ENCODE measurements at regions of chr1 and their contacts with region 1.

Region 1: DNA sequence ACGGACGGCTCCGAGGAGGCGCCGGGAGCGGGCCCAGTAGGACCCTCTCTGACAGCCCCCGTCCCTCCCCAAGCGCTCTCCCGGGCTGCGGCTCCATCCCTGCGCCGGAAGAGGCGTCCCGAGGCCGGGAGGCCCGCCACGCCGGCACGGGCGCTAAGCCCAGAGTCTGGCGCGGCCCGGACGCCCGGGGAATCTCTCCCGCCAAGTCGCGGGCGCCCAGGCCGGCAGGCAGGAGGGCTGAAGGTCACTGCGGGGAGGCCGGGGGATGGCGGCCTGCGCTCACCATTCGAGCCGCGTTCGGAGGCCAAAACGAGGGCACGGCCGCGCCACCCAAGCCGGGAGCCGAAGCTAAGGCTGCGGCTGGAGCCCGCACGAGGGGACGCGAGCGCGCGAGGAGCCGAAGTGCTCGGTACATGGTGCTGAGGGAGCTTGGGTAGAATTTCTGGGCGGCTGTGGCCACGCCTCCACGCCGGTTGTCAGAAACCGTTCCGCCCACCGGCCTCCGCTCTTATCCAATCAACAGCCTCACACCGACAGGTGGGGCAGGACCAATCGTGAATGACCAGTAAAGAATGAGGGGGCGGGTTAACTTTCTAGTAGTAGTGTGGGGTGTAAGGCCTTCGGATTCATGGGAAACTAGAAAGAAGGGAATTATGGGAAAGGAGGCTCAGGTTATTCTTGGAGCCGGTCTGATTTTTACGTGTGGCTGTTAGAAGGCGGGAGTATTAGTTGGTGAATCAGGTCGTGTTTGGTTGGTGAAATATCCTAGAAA is at the start of gene FH:
- DNase-seq: peak; percentile 97
- ATAC-seq: peak; percentile 98
- H3K4me3 ChIP-seq: peak within 1 kb of the TSS; percentile 56 to 84 (median 79)
- H3K4me3 Mint-ChIP-seq: peak within 1 kb of the TSS; percentile 89
- H3K27ac ChIP-seq: peak within 1 kb of the TSS; percentile 56 to 84
- H3K27ac Mint-ChIP-seq: peak within 1 kb of the TSS; percentile 71
- H3K4me1 ChIP-seq: peaks cover 9 to 10% of the 10 kb centered on the region in 2 donors
- H3K4me1 Mint-ChIP-seq: peaks cover 23% of the 10 kb centered on the region
- H3K27me3 ChIP-seq: peaks cover 0 to 3% (median 0%) of the 10 kb centered on the region in 4 experiments
- H3K27me3 Mint-ChIP-seq: peaks cover 3% of the 10 kb centered on the region
- CTCF ChIP-seq: no peak
- total RNA-seq, gene FH: 26.0 and 32.4 TPM in 2 replicates

Region 2: DNA sequence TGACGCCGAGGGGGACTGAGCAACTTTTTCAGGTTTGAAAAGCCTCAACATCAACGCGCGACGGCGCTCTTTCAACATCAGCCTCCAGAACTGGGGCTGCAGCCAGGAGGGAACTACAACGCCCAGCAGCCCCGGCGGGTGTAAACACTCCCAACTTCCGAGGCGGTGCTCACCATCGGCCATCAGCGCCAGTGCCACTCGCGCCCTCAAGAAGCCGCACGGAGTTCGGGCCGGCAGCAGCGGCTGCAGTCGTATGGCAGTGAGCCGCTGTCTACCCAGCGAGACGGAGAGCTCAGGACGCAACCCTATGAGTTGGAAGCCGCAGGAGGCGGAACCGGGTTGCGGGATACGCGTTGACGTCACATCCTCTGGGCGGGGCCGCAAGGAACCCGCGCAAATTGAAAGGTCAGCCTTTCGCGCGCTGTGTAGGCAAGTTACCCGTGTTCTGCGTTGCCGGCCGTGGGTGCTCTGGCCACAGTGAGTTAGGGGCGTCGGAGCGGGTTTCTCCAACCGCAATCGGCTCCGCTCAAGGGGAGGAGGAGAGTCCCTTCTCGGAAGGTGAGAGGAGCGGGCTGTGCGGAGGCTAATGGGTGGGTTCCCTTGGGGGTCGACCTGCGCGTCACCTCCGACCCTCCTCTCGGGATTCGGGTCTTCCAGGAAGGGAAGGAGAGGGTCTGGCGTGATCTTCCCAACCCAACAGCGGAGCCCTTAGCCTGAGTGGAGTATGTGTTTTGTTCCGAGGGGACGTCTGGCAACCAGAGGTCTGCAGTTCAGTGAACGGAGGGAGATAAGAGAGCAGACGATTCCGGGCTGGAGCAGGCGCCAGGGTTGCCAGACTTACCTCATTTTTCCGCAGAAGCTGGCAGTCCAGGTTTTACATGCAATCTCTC is 328.5 kb after region 1 on chr1 and contains the start of gene EXO1:
- CTCF ChIA-PET with region 1: no interaction called
- POLR2A ChIA-PET with region 1: no interaction called
- intact Hi-C with region 1: loop called (anchors 1 kb)
- DNase-seq: peak; percentile 96
- ATAC-seq: peak; percentile 98
- H3K4me3 ChIP-seq: peak within 1 kb of the TSS; percentile 73 to 98 (median 95)
- H3K4me3 Mint-ChIP-seq: peak within 1 kb of the TSS; percentile 99
- H3K27ac ChIP-seq: peak within 1 kb of the TSS; percentile 92 to 97
- H3K27ac Mint-ChIP-seq: peak within 1 kb of the TSS; percentile 99
- H3K4me1 ChIP-seq: peaks cover 9 to 12% of the 10 kb centered on the region in 2 donors
- H3K4me1 Mint-ChIP-seq: peaks cover 17% of the 10 kb centered on the region
- H3K27me3 ChIP-seq: no peaks in the 10 kb centered on the region
- H3K27me3 Mint-ChIP-seq: no peaks in the 10 kb centered on the region
- CTCF ChIP-seq: peak; percentile 47
- total RNA-seq, gene EXO1: 1.2 and 1.6 TPM in 2 replicates

Measured in B cell (primary cell).